ENCODE measurements at regions of chr4 and their contacts with region 1.

Region 1: GRCh38 chr4:150242820-150243458 is 164.7 kb downstream of the DCLK2 start:
- H3K4me3 Mint-ChIP-seq: no peak overlapping the region
- H3K27ac Mint-ChIP-seq: no peak overlapping the region
- H3K4me1 Mint-ChIP-seq: no peaks in the 10 kb centered on the region
- H3K27me3 Mint-ChIP-seq: no peaks in the 10 kb centered on the region

Region 2: GRCh38 chr4:149980941-149981340 is 262.0 kb before region 1 on chr4:
- intact Hi-C with region 1: loop called (anchors 1 kb)
- H3K4me3 Mint-ChIP-seq: no peak overlapping the region
- H3K27ac Mint-ChIP-seq: no peak overlapping the region
- H3K4me1 Mint-ChIP-seq: no peaks in the 10 kb centered on the region
- H3K27me3 Mint-ChIP-seq: no peaks in the 10 kb centered on the region

Region 3: DNA sequence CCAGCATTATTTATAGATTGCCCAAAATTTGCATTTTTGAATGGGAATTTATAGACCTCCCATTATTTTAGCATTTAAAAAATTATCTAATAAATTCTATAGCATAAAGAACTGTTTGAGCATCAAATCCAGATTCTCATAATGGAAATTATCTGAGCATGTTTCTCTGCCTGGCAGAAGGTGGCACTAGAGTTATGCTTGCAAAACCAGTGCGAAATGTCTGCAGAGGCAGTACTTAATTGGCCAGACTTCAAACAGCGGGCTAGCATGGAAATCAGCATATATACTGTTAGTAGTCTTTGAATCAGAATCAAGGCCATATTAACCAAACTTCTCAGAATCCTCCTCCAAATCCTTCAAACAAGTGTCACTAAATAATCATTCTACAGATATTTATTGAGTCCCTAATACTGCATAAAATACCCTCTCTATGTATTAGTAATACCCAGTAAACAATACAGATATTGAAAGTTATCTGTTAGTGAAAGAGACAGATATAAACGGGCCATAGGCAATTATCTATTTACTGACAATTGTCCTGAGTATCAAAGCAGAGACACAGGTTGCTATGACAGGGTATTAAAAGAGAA is 243.4 kb before region 1 on chr4:
- intact Hi-C with region 1: loop called (anchors 2 kb)
- H3K4me3 Mint-ChIP-seq: no peak overlapping the region
- H3K27ac Mint-ChIP-seq: no peak overlapping the region
- H3K4me1 Mint-ChIP-seq: no peaks in the 10 kb centered on the region
- H3K27me3 Mint-ChIP-seq: peaks cover 2% of the 10 kb centered on the region

Region 4: DNA sequence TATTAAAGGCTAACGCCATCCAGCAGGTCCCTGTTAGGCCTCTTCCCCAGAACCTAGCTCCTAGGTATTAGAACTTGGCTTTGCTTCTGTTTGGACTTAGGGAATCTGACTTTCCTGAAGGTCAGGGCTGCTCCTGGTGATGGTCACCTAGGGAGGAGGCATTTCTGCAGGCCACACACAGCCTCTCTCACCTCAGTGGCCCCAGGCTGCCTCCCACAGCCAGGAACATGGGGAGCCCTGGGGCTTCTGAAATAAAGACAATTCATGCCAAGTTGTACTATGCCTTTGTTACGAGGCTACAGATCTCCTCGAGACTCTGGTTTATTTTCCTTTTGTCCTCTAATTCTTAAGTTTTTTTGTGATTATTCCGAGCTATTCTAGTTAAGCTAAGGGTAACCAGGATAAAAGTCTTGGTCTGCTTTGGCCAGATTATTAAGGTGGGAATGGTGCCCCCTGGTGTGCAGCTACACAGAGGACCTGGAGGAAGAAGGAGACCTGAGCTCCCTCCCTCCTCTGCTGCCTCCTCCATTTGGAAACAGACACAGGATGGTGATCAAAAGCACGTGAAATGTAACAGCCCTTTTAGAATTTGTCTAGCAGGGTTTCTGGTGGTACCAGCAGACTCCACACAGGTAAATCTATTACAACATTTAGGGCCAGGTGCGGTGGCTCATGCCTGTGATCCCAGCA is 33.7 kb before region 1 on chr4:
- intact Hi-C with region 1: no loop called
- H3K4me3 Mint-ChIP-seq: no peak overlapping the region
- H3K27ac Mint-ChIP-seq: no peak overlapping the region
- H3K4me1 Mint-ChIP-seq: no peaks in the 10 kb centered on the region
- H3K27me3 Mint-ChIP-seq: no peaks in the 10 kb centered on the region

Region 5: GRCh38 chr4:150325872-150326271 is 82.9 kb after region 1 on chr4:
- intact Hi-C with region 1: no loop called
- H3K4me3 Mint-ChIP-seq: no peak overlapping the region
- H3K27ac Mint-ChIP-seq: no peak overlapping the region
- H3K4me1 Mint-ChIP-seq: no peaks in the 10 kb centered on the region
- H3K27me3 Mint-ChIP-seq: no peaks in the 10 kb centered on the region